Calu3 (cell line): ENCODE measurements at regions of chr13 and their contacts with region 1.

Region 1: GRCh38 chr13:101942038-101942437 is 459.8 kb downstream of the FGF14 start:
- DNase-seq: peak; percentile 4
- H3K4me3 Mint-ChIP-seq: no peak overlapping the region
- H3K27ac Mint-ChIP-seq: no peak overlapping the region
- H3K4me1 Mint-ChIP-seq: no peaks in the 10 kb centered on the region
- H3K27me3 Mint-ChIP-seq: no peaks in the 10 kb centered on the region
- CTCF ChIP-seq: no peak

Region 2: GRCh38 chr13:101144808-101145419 is 797.1 kb before region 1 on chr13:
- CTCF ChIA-PET with region 1: no interaction called
- intact Hi-C with region 1: loop called (anchors 10 kb)
- DNase-seq: no peak
- H3K4me3 Mint-ChIP-seq: no peak overlapping the region
- H3K27ac Mint-ChIP-seq: no peak overlapping the region
- H3K4me1 Mint-ChIP-seq: peaks cover 9% of the 10 kb centered on the region
- H3K27me3 Mint-ChIP-seq: no peaks in the 10 kb centered on the region
- CTCF ChIP-seq: no peak

Region 3: DNA sequence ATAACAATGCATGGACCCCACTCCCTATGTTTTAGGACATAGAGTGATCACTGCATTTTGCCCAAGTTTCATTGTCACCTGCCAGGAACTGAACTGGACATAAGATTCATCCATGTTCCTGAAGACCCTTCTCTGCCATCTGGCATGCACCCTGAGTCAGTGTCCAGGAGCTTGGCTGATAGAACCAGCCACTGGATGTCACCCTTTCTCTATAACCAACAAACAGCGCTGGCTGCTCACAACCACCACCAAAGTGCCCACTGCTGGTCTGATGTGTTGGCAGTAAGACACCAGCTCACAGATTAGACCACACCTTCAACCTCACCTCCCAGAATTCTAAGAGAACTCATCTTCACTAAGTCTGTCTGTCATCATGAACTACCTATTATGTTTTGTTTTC is 156.2 kb before region 1 on chr13:
- CTCF ChIA-PET with region 1: no interaction called
- intact Hi-C with region 1: loop called (anchors 1 kb)
- DNase-seq: peak; percentile 20
- H3K4me3 Mint-ChIP-seq: no peak overlapping the region
- H3K27ac Mint-ChIP-seq: no peak overlapping the region
- H3K4me1 Mint-ChIP-seq: no peaks in the 10 kb centered on the region
- H3K27me3 Mint-ChIP-seq: peaks cover 8% of the 10 kb centered on the region
- CTCF ChIP-seq: no peak

Region 4: GRCh38 chr13:102091231-102091630 is 149.2 kb after region 1 on chr13:
- CTCF ChIA-PET with region 1: no interaction called
- intact Hi-C with region 1: loop called (anchors 5 kb)
- DNase-seq: peak; percentile 3
- H3K4me3 Mint-ChIP-seq: no peak overlapping the region
- H3K27ac Mint-ChIP-seq: no peak overlapping the region
- H3K4me1 Mint-ChIP-seq: no peaks in the 10 kb centered on the region
- H3K27me3 Mint-ChIP-seq: no peaks in the 10 kb centered on the region
- CTCF ChIP-seq: no peak

Region 5: GRCh38 chr13:102466610-102467190 is 524.7 kb after region 1 on chr13:
- CTCF ChIA-PET with region 1: no interaction called
- intact Hi-C with region 1: loop called (anchors 10 kb)
- DNase-seq: no peak
- H3K4me3 Mint-ChIP-seq: no peak overlapping the region
- H3K27ac Mint-ChIP-seq: no peak overlapping the region
- H3K4me1 Mint-ChIP-seq: no peaks in the 10 kb centered on the region
- H3K27me3 Mint-ChIP-seq: no peaks in the 10 kb centered on the region
- CTCF ChIP-seq: no peak

Region 6: DNA sequence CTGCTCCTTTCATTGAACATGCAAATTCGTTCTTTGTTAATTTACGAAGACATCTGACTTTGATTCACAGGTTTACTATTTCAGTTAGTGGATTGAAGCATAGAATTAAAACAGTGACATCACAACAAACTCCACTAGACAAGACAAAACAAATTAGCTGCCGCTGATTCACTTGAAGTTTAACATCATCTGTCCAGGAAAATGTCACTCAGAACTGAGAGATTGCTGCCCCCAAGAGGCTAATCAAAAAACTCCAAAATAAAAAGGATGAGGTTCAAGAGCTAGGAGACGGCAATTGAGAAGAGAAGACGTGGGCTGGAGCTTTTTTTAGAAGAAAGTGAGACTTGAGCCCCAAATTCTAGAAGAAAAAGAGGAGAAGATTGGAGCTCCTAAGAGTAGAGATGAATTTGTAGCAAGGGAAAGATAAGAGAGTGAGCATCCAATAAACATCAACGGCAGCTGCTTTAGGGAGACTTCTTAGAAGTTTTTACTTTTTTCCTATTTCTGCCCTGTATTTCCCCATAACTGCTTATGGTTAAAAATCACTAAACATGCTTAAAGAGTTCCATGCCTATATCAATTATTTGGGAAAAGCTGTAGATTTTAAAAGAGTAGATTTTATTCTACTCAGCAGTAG is 614.0 kb after region 1 on chr13:
- CTCF ChIA-PET with region 1: interaction called, 4 read pairs
- intact Hi-C with region 1: loop called (anchors 5 kb)
- DNase-seq: no peak
- H3K4me3 Mint-ChIP-seq: no peak overlapping the region
- H3K27ac Mint-ChIP-seq: no peak overlapping the region
- H3K4me1 Mint-ChIP-seq: no peaks in the 10 kb centered on the region
- H3K27me3 Mint-ChIP-seq: no peaks in the 10 kb centered on the region
- CTCF ChIP-seq: no peak